CD4-positive, alpha-beta memory T cell (primary cell): ENCODE measurements at regions of chrX and their contacts with region 1.

Region 1: GRCh38 chrX:107716816-107717700 is 58.5 kb downstream of the TSC22D3 start:
- DNase-seq: peak; percentile 92 to 95 (median 95)
- H3K4me3 ChIP-seq: peak overlapping the region; percentile 61 to 92
- H3K4me3 Mint-ChIP-seq: peak overlapping the region; percentile 88 to 97 (median 96)
- H3K27ac ChIP-seq: peak overlapping the region; percentile 95
- H3K27ac Mint-ChIP-seq: peak overlapping the region; percentile 99 to 100 (median 100)
- H3K4me1 ChIP-seq: peaks cover 49% of the 10 kb centered on the region
- H3K4me1 Mint-ChIP-seq: peaks cover 25 to 61% (median 48%) of the 10 kb centered on the region in 4 donors
- H3K27me3 ChIP-seq: no peaks in the 10 kb centered on the region
- H3K27me3 Mint-ChIP-seq: no peaks in the 10 kb centered on the region

Region 2: DNA sequence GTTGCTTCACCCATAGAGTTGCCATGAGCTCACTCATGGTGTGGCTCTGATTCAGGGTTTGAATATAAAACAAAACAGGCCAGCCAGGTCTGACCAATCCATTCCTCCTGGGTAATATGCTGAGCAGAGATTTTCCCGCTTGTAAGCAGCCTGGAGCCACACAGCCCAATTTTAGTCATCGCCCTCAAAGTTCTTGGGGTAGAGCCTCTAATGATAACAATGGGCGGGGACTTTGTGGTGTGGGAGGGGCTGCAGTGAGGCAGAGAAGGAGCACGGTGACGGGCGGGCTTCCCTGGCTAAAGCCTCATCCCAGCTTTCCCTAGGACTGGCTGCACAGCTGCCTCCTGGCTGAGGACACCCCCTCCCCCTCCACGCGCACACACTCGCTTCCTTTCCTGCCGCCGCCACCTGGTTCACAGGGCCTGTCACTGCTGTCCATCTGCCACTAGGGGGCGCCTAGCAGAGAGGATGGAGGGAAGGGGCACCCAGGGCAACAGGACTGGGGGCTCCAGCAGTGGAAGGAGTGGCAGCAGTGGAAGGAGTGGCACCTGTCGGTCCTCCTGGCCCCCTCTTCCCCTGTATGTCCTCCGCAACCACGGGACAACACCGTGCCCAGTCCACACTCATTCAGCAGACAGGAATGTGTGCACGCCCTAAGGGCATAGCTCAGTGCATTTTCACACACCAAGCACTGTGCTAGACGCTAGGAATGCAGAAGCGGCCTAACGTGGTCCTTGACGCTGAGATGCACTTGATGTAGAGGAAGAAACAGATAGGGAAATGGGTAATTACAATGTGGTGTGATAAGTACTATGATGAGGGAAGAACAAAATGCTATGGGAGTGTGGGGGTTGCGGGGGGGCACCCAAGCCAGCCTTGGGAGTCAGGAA is 61.9 kb before region 1 on chrX:
- CTCF ChIA-PET with region 1: interaction called, 31 read pairs
- POLR2A ChIA-PET with region 1: interaction called, 32 read pairs
- intact Hi-C with region 1: loop called (anchors 1 kb)
- DNase-seq: peak; percentile 64 to 71 (median 67)
- H3K4me3 ChIP-seq: no peak overlapping the region
- H3K4me3 Mint-ChIP-seq: peak overlapping the region in 2 of 8 donors; percentile 2 to 9
- H3K27ac ChIP-seq: no peak overlapping the region
- H3K27ac Mint-ChIP-seq: peak overlapping the region in 5 of 7 donors; percentile 47 to 82 (median 57)
- H3K4me1 ChIP-seq: peaks cover 12% of the 10 kb centered on the region
- H3K4me1 Mint-ChIP-seq: peaks cover 11 to 15% (median 14%) of the 10 kb centered on the region in 4 donors
- H3K27me3 ChIP-seq: no peaks in the 10 kb centered on the region
- H3K27me3 Mint-ChIP-seq: no peaks in the 10 kb centered on the region

Region 3: GRCh38 chrX:107662824-107663223 is 54.2 kb before region 1 on chrX:
- CTCF ChIA-PET with region 1: interaction called, 31 read pairs
- POLR2A ChIA-PET with region 1: interaction called, 32 read pairs
- intact Hi-C with region 1: loop called (anchors 1 kb)
- DNase-seq: no peak
- H3K4me3 ChIP-seq: no peak overlapping the region
- H3K4me3 Mint-ChIP-seq: no peak overlapping the region
- H3K27ac ChIP-seq: no peak overlapping the region
- H3K27ac Mint-ChIP-seq: no peak overlapping the region
- H3K4me1 ChIP-seq: no peaks in the 10 kb centered on the region
- H3K4me1 Mint-ChIP-seq: peaks cover 4 to 11% (median 8%) of the 10 kb centered on the region in 4 donors
- H3K27me3 ChIP-seq: no peaks in the 10 kb centered on the region
- H3K27me3 Mint-ChIP-seq: no peaks in the 10 kb centered on the region

Region 4: DNA sequence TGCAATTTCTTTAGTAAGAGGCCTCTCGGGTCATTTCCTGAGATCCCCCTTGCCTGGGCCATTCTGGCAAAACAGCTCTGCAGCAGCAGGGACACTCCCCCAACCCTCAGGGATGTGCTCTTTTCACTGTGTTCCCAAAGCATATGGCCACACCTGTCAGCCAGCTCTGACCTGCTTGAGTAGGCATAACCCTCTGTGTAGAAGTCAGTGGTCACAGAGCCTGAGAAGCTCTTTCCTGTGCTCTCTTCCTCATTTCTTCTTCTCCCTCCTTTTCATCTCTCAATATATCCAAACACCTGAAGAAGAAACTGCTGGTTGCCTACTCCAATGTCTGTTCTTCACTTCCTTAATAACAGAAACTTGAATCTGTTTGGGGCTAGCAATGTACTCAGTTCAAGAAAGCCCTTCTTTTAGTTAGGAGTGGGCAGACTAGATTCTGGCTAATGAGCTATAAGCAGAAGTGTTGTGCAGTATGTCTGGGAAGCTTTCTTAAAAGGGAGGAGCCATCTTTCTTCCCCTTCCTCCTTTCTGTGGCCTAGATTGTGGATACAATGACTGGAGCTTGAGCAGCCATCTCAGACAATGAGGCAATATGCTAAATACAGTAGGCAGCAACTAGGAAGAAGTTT is 15.5 kb before region 1 on chrX:
- CTCF ChIA-PET with region 1: interaction called, 3 read pairs
- POLR2A ChIA-PET with region 1: interaction called, 32 read pairs
- intact Hi-C with region 1: no loop called
- DNase-seq: peak in 1 of 5 donors; percentile 16
- H3K4me3 ChIP-seq: no peak overlapping the region
- H3K4me3 Mint-ChIP-seq: peak overlapping the region in 1 of 8 donors; percentile 28
- H3K27ac ChIP-seq: no peak overlapping the region
- H3K27ac Mint-ChIP-seq: peak overlapping the region in 4 of 7 donors; percentile 5 to 42 (median 9)
- H3K4me1 ChIP-seq: peaks cover 21% of the 10 kb centered on the region
- H3K4me1 Mint-ChIP-seq: peaks cover 16 to 33% (median 30%) of the 10 kb centered on the region in 4 donors
- H3K27me3 ChIP-seq: no peaks in the 10 kb centered on the region
- H3K27me3 Mint-ChIP-seq: no peaks in the 10 kb centered on the region

Region 5: GRCh38 chrX:107741404-107741790 is 24.3 kb after region 1 on chrX:
- CTCF ChIA-PET with region 1: interaction called, 20 read pairs
- POLR2A ChIA-PET with region 1: interaction called, 210 read pairs
- intact Hi-C with region 1: loop called (anchors 1 kb)
- DNase-seq: peak in 1 of 5 donors; percentile 43
- H3K4me3 ChIP-seq: peak overlapping the region in 1 of 2 donors; percentile 41
- H3K4me3 Mint-ChIP-seq: peak overlapping the region; percentile 64 to 95 (median 85)
- H3K27ac ChIP-seq: peak overlapping the region; percentile 52
- H3K27ac Mint-ChIP-seq: peak overlapping the region; percentile 95 to 100 (median 98)
- H3K4me1 ChIP-seq: peaks cover 48% of the 10 kb centered on the region
- H3K4me1 Mint-ChIP-seq: peaks cover 23 to 49% (median 33%) of the 10 kb centered on the region in 4 donors
- H3K27me3 ChIP-seq: no peaks in the 10 kb centered on the region
- H3K27me3 Mint-ChIP-seq: peaks cover 0 to 4% of the 10 kb centered on the region in 2 donors

Region 6: DNA sequence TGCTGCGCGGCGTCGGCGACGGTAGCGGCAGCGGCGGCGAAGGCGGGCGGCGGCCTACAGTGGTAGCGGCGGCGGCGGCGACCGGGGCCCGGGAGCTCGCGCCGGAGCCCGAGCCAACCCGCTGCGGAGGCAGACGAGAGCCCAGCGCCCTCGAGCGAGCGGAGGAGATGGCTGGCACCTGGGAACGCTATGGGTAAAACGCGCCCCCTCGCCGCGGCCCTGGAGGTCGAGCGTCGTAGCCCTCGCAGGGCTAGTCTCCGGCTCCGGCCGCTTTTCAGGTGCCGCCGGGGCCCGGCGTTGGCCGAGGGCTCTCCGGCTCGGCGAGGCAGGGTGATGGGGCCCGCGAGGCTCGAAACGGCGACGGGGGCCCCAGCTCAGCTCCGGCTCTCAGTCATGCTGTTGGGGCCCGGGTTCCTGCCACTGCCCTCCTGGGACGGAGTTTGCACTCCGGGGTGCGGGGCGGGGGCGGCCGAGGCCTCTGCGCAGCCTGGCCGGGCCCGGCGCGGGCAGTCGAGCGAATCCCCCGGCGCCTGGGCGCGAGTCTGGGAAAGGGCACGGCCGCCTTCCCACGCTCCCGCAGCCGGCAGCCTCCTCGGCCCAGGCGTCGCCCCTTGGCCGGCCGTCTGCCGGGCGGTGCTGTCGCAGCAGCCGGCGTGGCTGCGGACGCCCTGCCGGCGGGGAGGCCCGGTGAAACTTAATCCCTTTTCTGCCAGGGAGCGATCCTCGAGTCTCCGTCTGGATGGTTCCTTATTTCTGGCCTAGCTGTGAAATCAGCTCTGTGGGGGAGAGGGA is 109.4 kb after region 1 on chrX:
- CTCF ChIA-PET with region 1: interaction called, 3 read pairs
- POLR2A ChIA-PET with region 1: interaction called, 5 read pairs
- intact Hi-C with region 1: loop called (anchors 5 kb)
- DNase-seq: peak in 4 of 5 donors; percentile 20 to 48 (median 43)
- H3K4me3 ChIP-seq: peak overlapping the region in 1 of 2 donors; percentile 49
- H3K4me3 Mint-ChIP-seq: peak overlapping the region; percentile 75 to 95 (median 90)
- H3K27ac ChIP-seq: peak overlapping the region; percentile 52
- H3K27ac Mint-ChIP-seq: peak overlapping the region; percentile 68 to 93 (median 84)
- H3K4me1 ChIP-seq: peaks cover 19% of the 10 kb centered on the region
- H3K4me1 Mint-ChIP-seq: peaks cover 26 to 59% (median 35%) of the 10 kb centered on the region in 4 donors
- H3K27me3 ChIP-seq: no peaks in the 10 kb centered on the region
- H3K27me3 Mint-ChIP-seq: peaks cover 0 to 1% of the 10 kb centered on the region in 2 donors